HEK293T (cell line): ENCODE measurements at regions of chr5 and their contacts with region 1.

Region 1: DNA sequence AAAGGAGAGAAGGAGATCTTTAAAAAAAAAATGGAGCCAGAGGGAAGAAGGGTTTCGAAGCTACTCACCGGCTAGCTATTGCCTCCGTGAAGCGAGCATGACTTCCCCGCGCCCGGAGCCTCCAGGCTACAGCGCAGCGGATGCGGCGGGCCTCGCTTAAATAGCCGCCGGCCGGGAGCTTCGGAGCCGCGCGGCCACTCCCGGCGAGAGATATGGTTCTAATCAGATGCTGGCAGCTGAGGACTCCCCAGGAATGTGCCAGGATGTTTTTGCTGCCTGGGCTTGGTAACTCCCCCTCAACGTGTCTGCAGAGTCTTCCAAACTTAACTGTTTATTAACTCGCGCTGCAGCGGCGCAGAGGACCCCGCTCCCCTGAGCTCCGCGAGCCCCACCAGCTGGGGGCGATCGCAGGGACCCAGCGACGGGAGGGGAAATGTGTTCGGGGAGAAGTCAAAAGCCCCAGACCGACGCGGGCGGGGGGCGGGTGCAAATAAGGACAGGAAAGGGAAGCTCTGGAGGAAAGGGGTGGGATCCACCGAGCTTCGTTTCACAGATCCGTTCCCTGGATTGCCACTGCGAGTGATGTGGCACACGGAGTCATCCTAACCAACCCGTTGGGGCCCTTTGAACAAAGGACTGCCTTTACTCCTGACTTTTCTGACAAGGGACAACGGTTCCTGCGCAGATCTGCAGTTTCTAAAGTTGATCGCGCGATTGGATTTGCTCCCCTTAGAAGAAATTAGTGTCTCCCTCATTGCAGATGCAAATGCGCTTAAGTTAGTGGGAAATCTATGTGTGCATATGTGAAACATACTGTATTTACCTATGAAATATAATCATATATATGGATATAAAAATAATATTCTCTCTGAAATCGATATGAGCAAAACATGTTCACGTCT is at the start of gene DAB2:
- DNase-seq: peak; percentile 74

Region 2: DNA sequence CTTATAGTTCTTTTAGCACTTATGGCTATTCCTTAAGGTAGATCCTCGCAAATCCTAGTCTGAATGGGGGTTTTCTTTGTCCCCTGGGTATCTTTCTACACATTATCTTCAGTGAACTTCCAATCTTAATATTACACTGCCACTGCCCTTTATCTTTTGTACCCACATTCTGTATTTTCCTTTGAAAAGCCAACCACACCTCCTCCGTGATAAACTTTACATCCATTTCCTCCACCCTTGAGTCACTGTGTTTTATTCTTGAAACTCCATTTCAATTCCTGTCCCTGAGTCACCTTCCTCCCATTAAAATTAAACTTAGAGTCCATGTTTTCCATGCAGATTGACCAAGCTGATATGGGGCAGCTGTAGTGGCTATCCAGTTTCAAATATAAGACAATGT is 307.6 kb before region 1 on chr5:
- CTCF ChIA-PET with region 1: no interaction called
- POLR2A ChIA-PET with region 1: no interaction called
- DNase-seq: no peak

Region 3: GRCh38 chr5:39360471-39361111 is 64.4 kb before region 1 on chr5:
- CTCF ChIA-PET with region 1: no interaction called
- POLR2A ChIA-PET with region 1: no interaction called
- DNase-seq: no peak

Region 4: DNA sequence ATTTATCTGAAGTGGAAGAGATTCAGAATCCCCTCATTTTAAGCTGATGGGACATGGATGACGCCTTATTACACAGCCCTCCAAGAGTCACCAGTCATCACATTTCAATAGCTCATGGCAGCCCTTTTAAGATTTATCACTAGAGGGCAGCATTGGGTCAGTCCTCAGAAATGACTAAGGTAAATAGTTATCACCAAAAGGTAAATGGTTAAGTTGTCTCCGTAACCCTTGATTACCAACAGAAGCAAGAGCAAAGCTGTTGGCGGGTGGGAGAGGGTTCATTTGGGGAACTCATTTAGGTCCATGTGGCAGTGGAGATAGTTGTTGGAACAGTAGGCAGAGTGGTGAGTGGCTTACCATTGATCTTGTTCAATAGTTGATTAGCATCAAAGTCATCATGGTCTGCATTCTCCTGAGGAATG is 48.7 kb before region 1 on chr5:
- CTCF ChIA-PET with region 1: interaction called, 8 read pairs
- POLR2A ChIA-PET with region 1: interaction called, 10 read pairs
- DNase-seq: peak; percentile 59

Region 5: DNA sequence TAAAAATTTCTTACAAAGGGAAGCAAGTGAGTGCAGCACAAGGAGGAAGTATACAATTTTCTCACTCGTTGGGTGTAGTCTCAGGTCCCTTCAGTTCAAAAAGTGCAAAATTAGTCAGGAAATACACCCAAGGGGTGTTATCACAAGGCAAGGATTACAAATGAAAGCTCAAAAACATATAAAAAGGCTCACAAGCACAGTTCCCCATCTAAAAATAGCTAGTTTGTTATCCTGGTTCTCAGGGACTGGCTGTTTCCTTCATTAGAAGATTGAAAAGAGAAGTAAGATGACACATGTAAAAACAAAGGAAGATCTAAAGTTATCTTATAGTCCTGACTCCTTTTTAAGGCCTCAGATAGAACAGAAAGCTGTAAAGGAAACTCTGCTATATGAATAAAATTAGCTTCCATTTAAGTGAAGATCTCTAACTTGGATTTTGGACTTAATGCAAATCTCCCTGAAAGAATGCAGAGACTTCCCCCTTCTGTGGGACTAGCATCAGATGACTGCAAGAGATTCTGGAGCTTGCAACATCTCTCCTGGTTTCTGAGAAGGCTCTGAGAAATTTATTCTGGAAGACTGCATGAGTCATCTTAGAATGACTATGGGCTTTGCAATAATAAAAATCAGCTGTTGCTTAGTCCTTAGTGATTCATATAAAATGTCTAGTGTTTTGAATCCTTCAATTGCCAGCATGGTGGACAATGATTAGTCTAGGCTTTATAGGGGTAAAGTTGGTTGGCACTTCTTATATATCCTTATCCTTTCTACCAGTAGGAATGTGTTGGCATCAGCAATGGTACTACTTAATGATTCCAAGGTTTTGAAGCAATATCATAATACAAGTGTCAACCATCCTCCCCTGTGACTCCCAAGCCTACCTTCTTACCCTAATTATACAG is 25.6 kb before region 1 on chr5:
- CTCF ChIA-PET with region 1: interaction called, 4 read pairs
- POLR2A ChIA-PET with region 1: interaction called, 12 read pairs
- DNase-seq: no peak

Region 6: GRCh38 chr5:39412721-39413394 is 12.1 kb before region 1 on chr5:
- CTCF ChIA-PET with region 1: interaction called, 9 read pairs
- POLR2A ChIA-PET with region 1: interaction called, 20 read pairs
- DNase-seq: no peak

Region 7: DNA sequence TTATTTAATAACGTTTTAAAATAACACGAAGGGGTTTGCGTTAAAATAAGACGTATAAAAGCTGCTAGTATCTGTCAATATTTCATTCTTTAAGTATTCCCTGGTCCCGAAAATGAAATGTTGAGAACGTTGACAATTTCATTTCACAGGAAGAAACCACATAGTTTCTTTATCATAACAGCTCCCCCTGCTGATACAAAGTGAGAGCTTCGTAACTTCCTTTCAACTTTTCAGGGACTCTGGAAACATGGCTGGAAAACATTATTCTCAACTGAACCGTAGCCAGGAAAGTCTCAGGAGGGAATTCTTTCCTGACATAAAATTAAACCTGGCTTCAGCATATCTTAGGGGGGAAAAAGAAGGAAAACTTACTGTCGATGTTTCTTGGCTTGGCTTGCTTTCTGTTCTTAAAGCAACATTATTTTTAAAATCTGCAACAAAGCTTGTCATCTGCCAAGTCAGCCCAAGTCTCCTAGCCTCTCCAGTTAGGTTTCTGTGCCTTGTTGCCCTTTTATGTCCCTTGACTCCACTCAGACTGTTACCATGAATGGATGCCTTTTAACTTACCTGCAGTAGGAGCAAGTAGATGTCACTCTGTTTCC is 122.7 kb after region 1 on chr5:
- CTCF ChIA-PET with region 1: interaction called, 12 read pairs
- POLR2A ChIA-PET with region 1: interaction called, 8 read pairs
- DNase-seq: peak; percentile 42

Region 8: GRCh38 chr5:40202814-40203440 is 777.9 kb after region 1 on chr5:
- CTCF ChIA-PET with region 1: no interaction called
- POLR2A ChIA-PET with region 1: no interaction called
- DNase-seq: no peak